ENCODE measurements at regions of chr2 and their contacts with region 1.

Region 1: DNA sequence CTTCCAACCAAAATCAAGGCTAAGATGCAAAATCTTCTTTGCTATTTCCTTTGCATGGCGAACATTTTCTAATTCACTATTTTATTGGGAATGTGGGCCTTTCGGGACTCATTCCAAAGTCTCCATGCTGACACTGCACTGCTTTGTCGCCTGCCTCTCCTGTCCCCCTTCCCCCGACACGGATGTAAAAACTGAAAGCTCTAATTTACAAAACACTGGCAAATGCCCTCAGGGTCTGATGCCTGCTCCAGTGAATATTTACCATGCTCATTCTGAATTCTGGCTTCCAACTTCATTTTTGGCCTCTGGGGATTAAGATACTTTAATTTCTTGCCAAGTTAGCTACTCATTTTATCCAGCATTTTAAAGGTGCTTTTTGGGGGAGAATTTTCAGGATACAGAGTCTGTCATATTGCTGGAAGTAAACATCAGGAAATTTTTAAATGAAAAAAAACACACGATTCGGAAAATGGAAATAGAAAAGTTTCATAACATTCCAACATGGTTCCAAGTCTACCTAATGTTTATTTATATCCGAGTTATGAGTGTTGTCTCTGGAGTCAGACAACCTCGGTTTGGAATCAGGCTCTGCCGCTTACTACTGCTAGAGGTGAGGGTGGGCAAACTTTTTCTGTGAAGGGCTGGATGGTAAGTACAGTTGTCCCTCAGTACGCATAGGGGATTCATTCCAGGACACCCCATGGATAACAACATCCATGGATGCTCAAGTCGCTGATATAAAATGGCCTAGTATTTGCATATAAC is 14.6 kb upstream of the LTBP1 start:
- DNase-seq: no peak

Region 2: GRCh38 chr2:32832821-32833220 is 99.3 kb before region 1 on chr2:
- intact Hi-C with region 1: no loop called
- DNase-seq: no peak

Region 3: GRCh38 chr2:32874931-32875330 is 57.2 kb before region 1 on chr2:
- intact Hi-C with region 1: loop called (anchors 5 kb)
- DNase-seq: no peak

Measured in posterior cingulate gyrus (tissue), 11 donors.